ENCODE measurements at regions of chr6 and their contacts with region 1.

Region 1: GRCh38 chr6:26285143-26286134 is 79.6 kb upstream of the BTN3A2 start:
- DNase-seq: peak; percentile 80
- ATAC-seq: peak; percentile 75
- H3K4me3 Mint-ChIP-seq: peak overlapping the region; percentile 86
- H3K27ac Mint-ChIP-seq: peak overlapping the region; percentile 96
- H3K4me1 Mint-ChIP-seq: peaks cover 29% of the 10 kb centered on the region
- H3K27me3 Mint-ChIP-seq: peaks cover 3% of the 10 kb centered on the region
- CTCF ChIP-seq: no peak

Region 2: DNA sequence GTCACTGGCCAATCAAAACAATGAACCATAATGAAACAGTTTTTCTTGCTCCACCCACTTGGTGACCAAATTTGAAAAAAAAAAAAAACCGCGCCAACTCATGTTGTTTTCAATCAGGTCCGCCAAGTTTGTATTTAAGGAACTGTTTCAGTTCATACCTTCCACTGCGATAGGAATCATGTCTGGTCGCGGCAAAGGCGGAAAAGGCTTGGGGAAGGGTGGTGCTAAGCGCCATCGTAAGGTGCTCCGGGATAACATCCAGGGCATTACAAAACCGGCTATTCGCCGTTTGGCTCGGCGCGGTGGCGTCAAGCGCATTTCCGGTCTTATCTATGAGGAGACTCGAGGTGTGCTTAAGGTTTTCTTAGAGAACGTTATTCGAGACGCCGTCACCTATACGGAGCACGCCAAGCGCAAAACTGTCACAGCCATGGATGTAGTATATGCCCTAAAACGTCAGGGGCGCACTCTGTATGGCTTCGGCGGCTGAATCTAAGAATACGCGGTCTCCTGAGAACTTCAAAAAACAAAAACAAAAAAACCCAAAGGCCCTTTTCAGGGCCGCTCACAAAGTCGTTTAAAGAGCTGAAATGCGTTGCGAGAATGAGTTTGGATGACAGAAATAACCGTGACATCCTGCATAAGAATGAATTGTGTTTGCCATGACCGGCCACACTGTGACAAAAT is 181.5 kb before region 1 on chr6:
- CTCF ChIA-PET with region 1: no interaction called
- POLR2A ChIA-PET with region 1: interaction called, 7 read pairs
- intact Hi-C with region 1: loop called (anchors 1 kb)
- DNase-seq: peak; percentile 83
- ATAC-seq: peak; percentile 85
- H3K4me3 Mint-ChIP-seq: peak overlapping the region; percentile 85
- H3K27ac Mint-ChIP-seq: peak overlapping the region; percentile 98
- H3K4me1 Mint-ChIP-seq: peaks cover 12% of the 10 kb centered on the region
- H3K27me3 Mint-ChIP-seq: peaks cover 3% of the 10 kb centered on the region
- CTCF ChIP-seq: no peak

Region 3: GRCh38 chr6:26204332-26205165 is 80.9 kb before region 1 on chr6:
- CTCF ChIA-PET with region 1: no interaction called
- POLR2A ChIA-PET with region 1: interaction called, 139 read pairs
- intact Hi-C with region 1: loop called (anchors 1 kb)
- DNase-seq: peak; percentile 70
- ATAC-seq: peak; percentile 59
- H3K4me3 Mint-ChIP-seq: no peak overlapping the region
- H3K27ac Mint-ChIP-seq: no peak overlapping the region
- H3K4me1 Mint-ChIP-seq: peaks cover 30% of the 10 kb centered on the region
- H3K27me3 Mint-ChIP-seq: peaks cover 2% of the 10 kb centered on the region
- CTCF ChIP-seq: no peak

Region 4: DNA sequence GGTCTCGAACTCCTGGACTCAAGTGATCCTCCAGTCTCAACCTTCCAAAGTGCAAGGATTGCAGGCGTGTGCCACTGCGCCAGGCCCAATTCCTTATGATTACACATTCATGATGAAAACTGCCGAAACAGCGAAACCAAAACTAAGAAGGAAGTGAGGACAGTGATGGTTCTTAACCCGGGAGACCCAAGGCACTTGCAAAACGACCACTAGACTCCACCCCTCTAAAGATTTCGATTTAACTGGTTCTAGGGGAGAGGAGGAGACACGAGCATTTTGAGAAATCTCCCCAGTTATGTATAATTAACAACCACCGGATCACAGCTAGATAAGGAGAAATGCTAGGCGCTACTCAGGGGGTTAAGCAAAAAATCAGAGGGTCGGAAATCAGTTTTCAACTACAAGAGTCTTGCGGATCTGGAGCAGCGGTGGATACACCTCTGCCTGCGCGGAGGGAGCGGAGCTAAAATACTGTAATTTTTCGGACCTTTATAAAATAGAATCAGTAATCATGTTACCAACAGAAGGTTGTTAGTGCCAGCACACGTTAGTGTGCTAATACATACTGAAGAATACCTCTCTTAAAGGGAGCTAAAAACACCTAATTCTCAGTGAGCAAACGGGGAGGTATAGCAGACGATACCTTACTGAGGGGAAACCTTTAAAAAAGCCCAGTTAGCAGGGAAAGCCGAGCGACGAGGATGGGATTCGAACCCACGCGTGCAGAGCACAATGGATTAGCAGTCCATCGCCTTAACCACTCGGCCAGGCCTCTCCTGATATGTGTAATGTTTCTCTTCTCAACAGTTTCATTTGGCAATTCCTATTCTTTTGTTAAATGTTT is 19.6 kb after region 1 on chr6:
- CTCF ChIA-PET with region 1: no interaction called
- POLR2A ChIA-PET with region 1: interaction called, 15 read pairs
- intact Hi-C with region 1: loop called (anchors 1 kb)
- DNase-seq: peak; percentile 39
- ATAC-seq: peak; percentile 87
- H3K4me3 Mint-ChIP-seq: peak overlapping the region; percentile 93
- H3K27ac Mint-ChIP-seq: peak overlapping the region; percentile 96
- H3K4me1 Mint-ChIP-seq: peaks cover 17% of the 10 kb centered on the region
- H3K27me3 Mint-ChIP-seq: no peaks in the 10 kb centered on the region
- CTCF ChIP-seq: no peak

Region 5: GRCh38 chr6:26520853-26521599 is 235.6 kb after region 1 on chr6:
- CTCF ChIA-PET with region 1: no interaction called
- POLR2A ChIA-PET with region 1: interaction called, 5 read pairs
- intact Hi-C with region 1: loop called (anchors 1 kb)
- DNase-seq: peak; percentile 78
- ATAC-seq: peak; percentile 72
- H3K4me3 Mint-ChIP-seq: peak overlapping the region; percentile 87
- H3K27ac Mint-ChIP-seq: peak overlapping the region; percentile 92
- H3K4me1 Mint-ChIP-seq: peaks cover 43% of the 10 kb centered on the region
- H3K27me3 Mint-ChIP-seq: peaks cover 1% of the 10 kb centered on the region
- CTCF ChIP-seq: no peak

Region 6: GRCh38 chr6:27138837-27139755 is 853.7 kb after region 1 on chr6:
- CTCF ChIA-PET with region 1: no interaction called
- POLR2A ChIA-PET with region 1: interaction called, 13 read pairs
- intact Hi-C with region 1: no loop called
- DNase-seq: peak; percentile 59
- ATAC-seq: peak; percentile 82
- H3K4me3 Mint-ChIP-seq: peak overlapping the region; percentile 97
- H3K27ac Mint-ChIP-seq: peak overlapping the region; percentile 98
- H3K4me1 Mint-ChIP-seq: peaks cover 62% of the 10 kb centered on the region
- H3K27me3 Mint-ChIP-seq: no peaks in the 10 kb centered on the region
- CTCF ChIP-seq: no peak

Region 7: DNA sequence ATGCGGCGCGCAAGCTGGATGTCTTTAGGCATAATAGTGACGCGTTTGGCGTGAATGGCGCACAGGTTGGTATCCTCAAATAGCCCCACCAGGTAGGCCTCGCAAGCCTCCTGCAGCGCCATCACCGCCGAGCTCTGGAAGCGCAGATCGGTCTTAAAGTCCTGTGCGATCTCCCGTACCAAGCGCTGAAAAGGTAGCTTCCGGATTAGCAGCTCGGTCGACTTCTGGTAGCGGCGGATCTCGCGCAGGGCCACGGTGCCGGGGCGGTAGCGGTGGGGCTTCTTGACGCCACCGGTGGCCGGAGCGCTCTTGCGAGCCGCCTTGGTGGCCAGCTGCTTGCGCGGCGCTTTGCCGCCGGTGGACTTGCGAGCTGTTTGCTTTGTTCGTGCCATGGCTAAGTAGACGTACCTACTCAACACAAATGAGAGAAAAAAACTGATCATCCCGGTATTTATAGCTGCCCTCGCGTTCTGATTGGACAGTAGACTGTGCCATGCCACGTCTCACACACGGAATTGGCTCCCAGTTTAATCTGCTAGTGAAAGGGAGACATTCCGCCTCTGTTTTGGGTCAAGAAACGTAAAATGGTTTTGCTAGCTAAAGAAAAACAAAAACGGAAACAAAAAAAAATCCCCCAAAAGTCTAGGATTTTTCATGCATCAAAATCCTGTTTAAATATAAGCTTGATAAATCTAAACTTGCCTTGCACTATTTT is 1586.6 kb after region 1 on chr6:
- CTCF ChIA-PET with region 1: no interaction called
- POLR2A ChIA-PET with region 1: interaction called, 15 read pairs
- intact Hi-C with region 1: no loop called
- DNase-seq: peak; percentile 73
- ATAC-seq: peak; percentile 80
- H3K4me3 Mint-ChIP-seq: peak overlapping the region; percentile 94
- H3K27ac Mint-ChIP-seq: peak overlapping the region; percentile 95
- H3K4me1 Mint-ChIP-seq: peaks cover 36% of the 10 kb centered on the region
- H3K27me3 Mint-ChIP-seq: no peaks in the 10 kb centered on the region
- CTCF ChIP-seq: no peak